ENCODE measurements at regions of chr20 and their contacts with region 1.

Region 1: DNA sequence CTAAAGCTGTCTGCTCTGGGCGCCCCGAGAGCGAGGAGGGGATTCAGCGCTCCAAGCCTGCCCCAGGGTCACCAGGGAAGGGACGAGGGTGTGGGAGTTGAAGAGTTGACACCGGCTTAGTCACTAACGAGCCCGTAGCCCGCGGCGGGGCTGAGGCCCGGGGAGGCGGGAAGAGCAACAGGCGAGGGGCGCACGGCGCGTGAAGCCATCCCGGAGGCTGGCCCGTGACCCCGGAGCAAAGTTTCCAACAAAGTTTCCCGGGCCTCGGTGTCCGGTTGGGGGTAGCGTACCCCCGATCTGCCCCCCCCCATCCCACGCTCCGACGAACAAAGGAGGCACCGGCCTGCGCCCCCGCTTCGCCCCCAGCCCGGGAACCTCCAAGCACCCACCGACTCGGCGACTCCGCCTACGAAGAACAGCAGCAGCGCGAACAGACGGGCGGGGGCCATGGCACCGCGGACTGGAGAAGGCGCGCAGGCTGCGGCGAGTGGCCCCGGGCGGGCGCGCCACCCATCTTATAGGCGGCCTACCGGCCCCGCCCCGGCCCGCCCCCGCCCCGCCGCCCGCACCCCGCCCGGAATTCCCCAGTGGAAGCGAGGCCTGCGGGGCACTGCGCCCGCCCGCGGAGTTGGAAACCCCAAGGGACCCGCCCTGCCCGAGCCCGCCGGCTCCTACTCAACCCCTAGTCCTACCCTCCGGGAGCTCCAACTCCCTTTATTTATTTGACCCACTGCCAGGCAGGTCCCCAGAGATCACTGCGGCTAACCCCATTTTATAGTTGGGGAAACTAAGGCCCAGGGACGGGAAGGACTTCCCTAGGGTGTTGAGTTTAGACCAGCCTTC is at the start of gene SDC4:
- DNase-seq: peak in 1 of 2 donors; percentile 85
- H3K4me3 ChIP-seq: peak within 1 kb of the TSS; percentile 60 to 80
- H3K27ac ChIP-seq: peak within 1 kb of the TSS; percentile 93 to 96
- H3K4me1 ChIP-seq: peaks cover 30 to 33% of the 10 kb centered on the region in 2 donors
- H3K27me3 ChIP-seq: no peaks in the 10 kb centered on the region
- CTCF ChIP-seq: no peak
- total RNA-seq, gene SDC4: 63.8 TPM

Region 2: DNA sequence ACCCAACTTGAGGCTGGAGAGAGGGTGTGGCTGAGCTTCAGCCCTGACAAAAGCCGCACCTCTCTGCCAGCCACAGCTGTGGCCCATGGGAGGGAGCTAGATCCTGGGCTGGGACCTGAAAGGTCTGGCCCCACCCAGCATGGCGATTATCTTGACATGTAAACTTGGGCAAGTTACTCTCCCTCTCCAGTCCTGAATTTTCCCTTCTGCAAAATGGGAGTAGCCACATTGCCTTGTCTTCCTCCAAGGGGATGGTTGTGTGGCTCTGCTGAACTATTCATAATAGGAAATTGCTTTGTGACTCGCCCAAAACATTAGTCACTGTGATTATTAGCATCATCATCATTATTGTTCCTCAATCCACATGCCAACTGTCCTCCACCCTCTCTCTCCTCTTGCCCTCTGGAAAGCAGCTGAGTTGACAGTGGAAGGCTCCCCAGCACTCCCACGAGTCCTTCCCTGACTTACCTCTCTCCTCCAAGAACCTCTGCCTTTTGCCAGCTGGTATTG is 64.6 kb before region 1 on chr20:
- intact Hi-C with region 1: no loop called
- DNase-seq: no peak
- H3K4me3 ChIP-seq: no peak overlapping the region
- H3K27ac ChIP-seq: no peak overlapping the region
- H3K4me1 ChIP-seq: no peaks in the 10 kb centered on the region
- H3K27me3 ChIP-seq: no peaks in the 10 kb centered on the region
- CTCF ChIP-seq: no peak

Region 3: DNA sequence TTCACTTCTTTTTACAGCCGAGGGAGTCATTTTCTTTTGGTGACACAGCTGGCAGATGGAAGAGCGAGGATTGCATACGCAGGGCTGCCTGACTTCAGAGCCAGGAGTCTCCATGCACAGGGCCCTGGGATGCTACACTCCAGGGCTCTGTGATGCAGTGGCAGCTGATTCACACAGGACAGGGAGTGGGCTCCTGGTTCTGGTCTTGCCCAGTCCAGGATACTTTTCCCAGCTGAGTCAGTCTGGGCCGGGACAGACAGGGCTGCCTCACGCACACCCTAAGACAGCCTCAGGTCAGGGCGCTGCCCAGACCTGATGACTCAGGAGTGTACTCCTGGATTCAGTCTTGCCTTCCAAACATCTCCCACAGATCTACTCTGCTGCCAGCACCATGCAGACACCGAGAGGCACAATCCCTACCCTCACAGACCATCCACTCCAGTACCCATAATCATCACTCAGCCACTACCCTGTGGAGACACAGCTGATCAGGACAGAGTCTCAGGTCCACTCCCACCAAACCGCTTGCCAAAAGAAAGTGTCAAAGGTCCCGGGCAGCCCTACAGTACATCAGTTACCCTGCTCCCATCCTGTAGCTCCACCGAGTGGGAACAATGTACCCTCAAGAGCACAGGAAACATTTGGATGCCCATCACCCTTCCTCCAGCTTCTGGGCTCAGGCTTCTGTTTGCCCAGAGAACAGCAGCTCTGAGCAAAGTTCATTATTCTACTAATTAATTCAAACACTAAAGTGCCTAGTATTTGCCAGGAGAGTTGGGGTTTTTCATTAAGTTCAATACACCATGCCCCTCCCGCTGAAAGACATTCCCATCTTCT is 11.4 kb before region 1 on chr20:
- intact Hi-C with region 1: loop called (anchors 1 kb)
- DNase-seq: peak; percentile 76 to 93
- H3K4me3 ChIP-seq: peak overlapping the region in 1 of 2 donors; percentile 7
- H3K27ac ChIP-seq: peak overlapping the region; percentile 89 to 93
- H3K4me1 ChIP-seq: peaks cover 22 to 55% of the 10 kb centered on the region in 2 donors
- H3K27me3 ChIP-seq: no peaks in the 10 kb centered on the region
- CTCF ChIP-seq: no peak

Measured in ascending aorta (tissue), 2 donors.